ENCODE measurements at regions of chr2 and their contacts with region 1.

Region 1: DNA sequence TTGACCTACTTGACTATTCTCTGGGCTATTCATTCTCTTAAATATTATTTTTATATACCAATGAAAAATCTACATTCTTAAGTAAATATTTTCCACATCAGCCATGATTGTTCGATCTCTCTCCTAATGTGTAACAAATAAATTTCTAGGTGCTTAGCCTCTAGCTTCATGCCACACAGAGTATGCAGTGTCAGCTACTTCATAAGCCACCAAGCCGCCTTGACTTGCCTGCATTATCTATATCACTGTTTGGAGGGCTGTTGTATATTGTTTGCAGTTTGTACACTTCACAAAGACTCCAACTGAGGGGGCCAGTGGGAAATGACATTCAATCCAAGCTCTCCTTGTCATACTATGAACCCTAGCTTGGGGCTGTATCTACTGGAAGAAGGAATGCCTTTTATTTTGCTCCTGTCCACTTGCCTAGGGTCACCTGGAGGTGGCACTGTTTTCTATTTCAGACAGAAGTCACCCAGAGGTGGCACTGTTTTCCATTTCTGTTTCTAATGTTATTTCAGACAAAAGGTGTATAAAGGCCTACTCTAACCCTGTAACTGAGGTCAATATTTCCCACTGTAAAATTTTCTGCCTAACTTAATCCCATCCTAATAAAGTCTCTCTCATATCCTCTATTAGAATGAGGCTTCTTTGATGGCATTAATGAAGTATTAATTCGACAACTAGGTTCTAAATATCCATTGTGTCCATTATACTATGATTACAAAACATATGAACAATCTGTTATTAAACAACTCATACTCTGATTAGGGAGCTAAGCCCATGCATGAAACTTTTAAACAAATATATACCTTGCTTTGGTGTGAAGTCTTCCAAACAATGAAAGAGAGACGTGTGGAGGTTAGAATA is 36.4 kb downstream of the COL5A2 start:
- DNase-seq: peak; percentile 66
- ATAC-seq: peak; percentile 93
- H3K4me3 Mint-ChIP-seq: no peak overlapping the region
- H3K27ac Mint-ChIP-seq: no peak overlapping the region
- H3K4me1 Mint-ChIP-seq: no peaks in the 10 kb centered on the region
- H3K27me3 Mint-ChIP-seq: no peaks in the 10 kb centered on the region
- CTCF ChIP-seq: peak; percentile 86

Region 2: DNA sequence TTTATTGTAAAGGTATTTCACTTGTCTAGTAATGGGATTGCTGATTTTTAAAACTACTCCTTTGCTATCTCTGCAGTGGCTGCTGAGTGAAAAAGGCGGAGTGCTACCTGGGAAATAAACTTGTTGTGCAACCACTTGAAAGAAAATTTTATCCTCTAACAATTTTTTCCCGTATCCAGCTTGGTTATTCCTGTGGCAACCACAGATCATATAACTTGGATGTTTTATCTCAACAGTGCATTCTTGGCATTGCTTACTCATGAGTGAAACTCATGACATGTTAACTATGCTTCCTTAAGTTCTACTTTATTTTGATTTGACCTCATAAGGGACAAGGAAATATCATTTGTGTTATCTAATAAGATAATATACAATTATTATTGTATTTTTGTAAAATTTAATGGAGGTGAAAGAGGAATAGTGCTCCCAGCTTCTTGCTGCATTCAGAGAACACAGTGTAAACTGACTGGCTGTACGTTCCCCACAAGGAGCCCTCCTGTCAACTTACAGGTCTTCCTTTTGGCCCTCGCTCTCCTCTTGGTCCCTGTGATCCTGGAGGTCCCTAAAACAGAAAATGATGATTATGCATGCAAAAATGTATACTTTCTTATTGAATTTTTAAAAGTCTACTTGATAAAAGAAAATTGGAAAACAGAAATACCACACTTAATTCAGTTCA is 46.2 kb before region 1 on chr2:
- CTCF ChIA-PET with region 1: interaction called, 18 read pairs
- POLR2A ChIA-PET with region 1: no interaction called
- intact Hi-C with region 1: no loop called
- DNase-seq: no peak
- ATAC-seq: no peak
- H3K4me3 Mint-ChIP-seq: no peak overlapping the region
- H3K27ac Mint-ChIP-seq: no peak overlapping the region
- H3K4me1 Mint-ChIP-seq: no peaks in the 10 kb centered on the region
- H3K27me3 Mint-ChIP-seq: no peaks in the 10 kb centered on the region
- CTCF ChIP-seq: no peak

Region 3: GRCh38 chr2:189129971-189130370 is 13.2 kb before region 1 on chr2:
- CTCF ChIA-PET with region 1: interaction called, 53 read pairs
- POLR2A ChIA-PET with region 1: no interaction called
- intact Hi-C with region 1: no loop called
- DNase-seq: no peak
- ATAC-seq: no peak
- H3K4me3 Mint-ChIP-seq: no peak overlapping the region
- H3K27ac Mint-ChIP-seq: no peak overlapping the region
- H3K4me1 Mint-ChIP-seq: no peaks in the 10 kb centered on the region
- H3K27me3 Mint-ChIP-seq: peaks cover 2% of the 10 kb centered on the region
- CTCF ChIP-seq: no peak

Region 4: DNA sequence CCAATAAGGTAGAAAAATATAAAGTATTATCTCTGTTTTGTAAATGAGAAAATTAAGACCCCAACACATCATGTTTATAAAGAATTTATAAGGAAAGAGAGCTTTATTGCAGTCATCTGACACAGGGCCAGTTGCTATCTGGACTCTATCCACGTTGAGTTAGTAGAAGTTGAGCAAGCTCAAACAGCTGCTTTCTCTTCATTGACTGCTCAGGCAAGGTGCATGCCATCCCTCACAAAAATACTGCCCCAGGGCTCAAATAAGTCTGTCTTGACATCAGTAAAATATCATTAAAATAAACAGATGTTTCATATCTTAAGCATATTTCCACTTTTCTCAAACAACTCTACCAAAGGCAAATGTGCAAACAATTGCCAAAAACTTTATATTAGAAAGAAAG is 21.6 kb after region 1 on chr2:
- CTCF ChIA-PET with region 1: interaction called, 11 read pairs
- POLR2A ChIA-PET with region 1: no interaction called
- intact Hi-C with region 1: no loop called
- DNase-seq: no peak
- ATAC-seq: no peak
- H3K4me3 Mint-ChIP-seq: no peak overlapping the region
- H3K27ac Mint-ChIP-seq: no peak overlapping the region
- H3K4me1 Mint-ChIP-seq: no peaks in the 10 kb centered on the region
- H3K27me3 Mint-ChIP-seq: no peaks in the 10 kb centered on the region
- CTCF ChIP-seq: no peak

Region 5: GRCh38 chr2:189221853-189222772 is 79.0 kb after region 1 on chr2:
- CTCF ChIA-PET with region 1: interaction called, 10 read pairs
- POLR2A ChIA-PET with region 1: no interaction called
- intact Hi-C with region 1: no loop called
- DNase-seq: no peak
- ATAC-seq: no peak
- H3K4me3 Mint-ChIP-seq: no peak overlapping the region
- H3K27ac Mint-ChIP-seq: no peak overlapping the region
- H3K4me1 Mint-ChIP-seq: peaks cover 4% of the 10 kb centered on the region
- H3K27me3 Mint-ChIP-seq: no peaks in the 10 kb centered on the region
- CTCF ChIP-seq: no peak

Region 6: GRCh38 chr2:189347540-189347939 is 204.4 kb after region 1 on chr2:
- CTCF ChIA-PET with region 1: interaction called, 13 read pairs
- POLR2A ChIA-PET with region 1: no interaction called
- intact Hi-C with region 1: no loop called
- DNase-seq: peak; percentile 27
- ATAC-seq: peak; percentile 69
- H3K4me3 Mint-ChIP-seq: no peak overlapping the region
- H3K27ac Mint-ChIP-seq: peak overlapping the region; percentile 30
- H3K4me1 Mint-ChIP-seq: peaks cover 18% of the 10 kb centered on the region
- H3K27me3 Mint-ChIP-seq: no peaks in the 10 kb centered on the region
- CTCF ChIP-seq: peak; percentile 41

Region 7: DNA sequence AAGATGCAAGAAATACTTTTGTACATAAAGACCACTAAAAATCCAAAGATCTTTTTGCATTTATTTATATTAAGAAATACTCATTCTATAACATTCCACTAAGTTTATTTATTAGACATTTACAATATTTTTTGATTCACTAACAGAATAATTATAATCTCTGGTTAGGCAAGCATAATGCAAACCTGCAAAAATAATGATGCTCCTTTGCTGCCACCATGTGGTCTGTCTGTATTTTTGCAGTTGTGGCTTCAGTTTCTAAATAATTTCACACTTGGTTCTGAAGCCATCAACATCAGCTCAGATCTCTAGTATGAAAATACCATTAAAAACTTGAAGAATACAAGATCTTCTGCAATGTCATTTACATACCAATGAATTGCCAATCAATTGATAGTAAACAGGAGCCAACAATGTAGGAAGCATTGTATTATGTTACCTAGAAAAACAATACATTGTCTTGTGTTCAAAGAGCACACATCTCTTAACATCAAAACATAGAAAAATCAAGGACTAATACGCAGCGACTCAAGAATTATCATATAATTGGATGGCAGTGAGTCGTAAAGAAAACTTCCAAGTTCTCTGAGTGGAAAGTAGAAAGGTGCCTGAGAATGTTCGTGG is 269.3 kb after region 1 on chr2:
- CTCF ChIA-PET with region 1: interaction called, 40 read pairs
- POLR2A ChIA-PET with region 1: no interaction called
- intact Hi-C with region 1: loop called (anchors 2 kb)
- DNase-seq: peak; percentile 42
- ATAC-seq: peak; percentile 65
- H3K4me3 Mint-ChIP-seq: no peak overlapping the region
- H3K27ac Mint-ChIP-seq: no peak overlapping the region
- H3K4me1 Mint-ChIP-seq: peaks cover 30% of the 10 kb centered on the region
- H3K27me3 Mint-ChIP-seq: no peaks in the 10 kb centered on the region
- CTCF ChIP-seq: peak; percentile 92